Breast epithelium (tissue), 4 donors: ENCODE measurements at regions of chr19 and their contacts with region 1.

Region 1: GRCh38 chr19:30848636-30849425 is 476.6 kb downstream of the ZNF536 start:
- DNase-seq: no peak
- H3K4me3 ChIP-seq: no peak overlapping the region
- H3K27ac ChIP-seq: no peak overlapping the region
- H3K4me1 ChIP-seq: no peaks in the 10 kb centered on the region
- H3K27me3 ChIP-seq: no peaks in the 10 kb centered on the region
- CTCF ChIP-seq: no peak
- POLR2A ChIP-seq: no peak

Region 2: DNA sequence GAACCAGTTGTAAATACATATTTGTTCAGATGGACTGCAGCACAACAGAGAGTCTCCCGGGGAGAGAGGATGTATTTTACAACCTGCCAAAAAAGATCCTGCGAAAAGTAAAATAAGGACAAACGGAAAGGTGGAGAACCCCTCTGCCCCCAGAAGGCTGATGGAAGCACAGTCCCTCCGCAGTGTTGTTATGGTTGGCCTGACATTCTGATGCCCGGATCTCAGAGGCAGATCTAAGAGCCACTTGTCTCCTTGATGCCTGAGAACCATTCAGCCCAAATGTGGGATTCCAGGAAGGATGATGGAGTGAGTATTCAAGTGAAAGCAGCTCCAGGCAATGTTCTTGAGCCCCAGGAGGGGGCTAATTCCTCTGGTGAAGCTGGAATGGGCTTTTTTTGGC is 18.0 kb before region 1 on chr19:
- intact Hi-C with region 1: loop called (anchors 1 kb)
- DNase-seq: no peak
- H3K4me3 ChIP-seq: no peak overlapping the region
- H3K27ac ChIP-seq: no peak overlapping the region
- H3K4me1 ChIP-seq: no peaks in the 10 kb centered on the region
- H3K27me3 ChIP-seq: no peaks in the 10 kb centered on the region
- CTCF ChIP-seq: no peak
- POLR2A ChIP-seq: no peak